ENCODE measurements at regions of chr15 and their contacts with region 1.

Region 1: DNA sequence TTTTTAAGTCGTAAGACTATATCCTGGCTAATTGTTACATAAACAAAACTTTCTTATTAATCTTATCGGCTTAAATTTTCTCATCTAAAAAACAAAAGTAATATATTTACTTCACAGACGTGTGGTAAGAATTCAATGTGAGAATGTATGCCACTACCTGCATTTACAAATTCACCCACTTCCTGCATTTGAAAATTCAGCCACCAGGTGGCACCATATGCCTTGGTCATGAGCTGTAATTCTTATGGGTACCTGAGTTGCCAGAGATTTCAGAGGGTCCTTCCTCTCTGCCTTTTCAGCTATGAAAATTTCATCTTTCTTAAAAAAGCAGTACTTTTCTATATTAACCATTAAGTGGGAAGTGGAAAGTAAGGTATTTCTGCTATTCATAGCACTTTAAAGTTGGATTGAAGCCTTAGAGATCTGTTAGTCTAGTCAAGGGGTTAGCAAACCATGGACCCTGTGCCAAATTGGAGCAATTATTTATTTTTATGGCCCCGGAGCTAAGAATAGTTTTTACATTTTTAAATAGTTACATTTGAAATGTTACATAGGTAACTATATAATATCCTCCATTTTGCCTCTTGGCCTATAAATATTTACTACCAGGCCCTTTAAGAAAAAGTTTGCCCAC is 127.8 kb downstream of the HCN4 start:
- DNase-seq: peak; percentile 47
- H3K4me3 ChIP-seq: no peak overlapping the region; a peak in 1 of 4 replicates
- H3K27ac ChIP-seq: no peak overlapping the region
- H3K4me1 ChIP-seq: peaks cover 0 to 24% of the 10 kb centered on the region in 2 experiments; a peak in 2 of 4 replicates
- H3K27me3 ChIP-seq: no peaks in the 10 kb centered on the region
- CTCF ChIP-seq: peak; percentile 95
- EP300 ChIP-seq: no peak
- RAD21 ChIP-seq: peak; percentile 82

Region 2: GRCh38 chr15:73081321-73081958 is 159.5 kb before region 1 on chr15:
- CTCF ChIA-PET with region 1: interaction called, 11 read pairs
- POLR2A ChIA-PET with region 1: no interaction called
- DNase-seq: peak; percentile 17
- H3K4me3 ChIP-seq: no peak overlapping the region
- H3K27ac ChIP-seq: no peak overlapping the region
- H3K4me1 ChIP-seq: peaks cover 0 to 14% of the 10 kb centered on the region in 2 experiments; a peak in 2 of 4 replicates
- H3K27me3 ChIP-seq: no peaks in the 10 kb centered on the region
- CTCF ChIP-seq: peak; percentile 85
- EP300 ChIP-seq: no peak
- RAD21 ChIP-seq: peak; percentile 82

Region 3: DNA sequence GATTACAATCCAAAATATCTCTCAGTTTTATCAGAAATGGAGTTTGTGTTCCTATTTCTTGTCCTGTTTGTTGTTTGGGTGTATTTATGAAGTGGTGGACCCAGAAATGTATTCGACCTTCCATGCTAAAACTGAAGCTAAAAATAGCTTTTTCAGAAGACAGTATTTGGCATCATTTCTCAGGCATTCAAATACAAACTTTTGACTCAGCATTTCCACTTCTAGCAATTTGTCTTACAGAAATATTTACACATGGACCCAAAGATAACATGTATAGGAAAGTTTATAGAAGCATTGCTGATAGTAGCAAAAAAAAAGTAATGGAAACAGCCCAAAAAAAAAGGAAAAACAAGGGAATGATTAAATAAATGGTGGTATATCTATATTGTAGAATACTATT is 28.6 kb before region 1 on chr15:
- CTCF ChIA-PET with region 1: interaction called, 10 read pairs
- POLR2A ChIA-PET with region 1: no interaction called
- DNase-seq: no peak
- H3K4me3 ChIP-seq: no peak overlapping the region
- H3K27ac ChIP-seq: no peak overlapping the region
- H3K4me1 ChIP-seq: no peaks in the 10 kb centered on the region
- H3K27me3 ChIP-seq: no peaks in the 10 kb centered on the region
- CTCF ChIP-seq: no peak
- EP300 ChIP-seq: no peak
- RAD21 ChIP-seq: no peak

Region 4: DNA sequence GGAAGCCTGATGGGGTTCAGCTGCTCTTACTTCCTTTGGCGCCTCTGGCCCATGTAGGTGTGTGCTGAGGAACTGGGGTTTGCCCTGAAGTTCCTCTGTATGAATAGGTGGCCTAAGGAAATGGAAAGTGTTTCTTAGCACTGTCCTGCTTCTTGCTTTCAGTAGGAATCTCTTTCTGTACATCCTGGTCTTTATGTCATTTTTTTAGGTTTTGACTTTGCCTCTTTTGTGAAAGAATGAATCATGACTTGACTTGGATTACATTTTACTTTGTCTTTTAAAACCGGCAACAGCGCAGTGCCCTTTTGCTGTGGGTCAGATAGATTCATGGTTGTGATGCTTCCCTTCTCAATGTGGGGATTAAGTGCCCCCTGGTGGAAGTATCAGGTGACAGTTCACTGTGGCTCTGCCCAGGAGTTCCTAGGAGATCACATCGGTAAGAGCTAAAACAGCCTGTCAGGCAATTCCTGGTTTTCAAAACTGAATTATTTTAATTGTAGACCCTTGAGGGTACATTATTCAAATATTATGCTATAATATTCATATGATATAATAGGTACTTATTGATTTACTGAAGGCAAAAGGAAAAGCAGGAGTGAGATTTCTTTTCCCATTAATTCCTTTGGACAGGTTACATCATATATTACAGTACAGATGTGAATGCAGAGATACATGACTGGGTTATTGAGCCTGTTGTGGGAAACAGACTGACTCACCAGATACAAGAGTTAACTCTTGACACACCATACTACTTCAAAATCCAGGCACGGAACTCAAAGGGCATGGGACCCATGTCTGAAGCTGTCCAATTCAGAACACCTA is 32.4 kb after region 1 on chr15:
- CTCF ChIA-PET with region 1: interaction called, 124 read pairs
- POLR2A ChIA-PET with region 1: no interaction called
- DNase-seq: peak; percentile 71
- H3K4me3 ChIP-seq: peak overlapping the region in 1 of 2 experiments; percentile 7; a peak in 1 of 4 replicates
- H3K27ac ChIP-seq: no peak overlapping the region
- H3K4me1 ChIP-seq: no peaks in the 10 kb centered on the region; a peak in 1 of 4 replicates
- H3K27me3 ChIP-seq: no peaks in the 10 kb centered on the region
- CTCF ChIP-seq: peak; percentile 87
- EP300 ChIP-seq: no peak
- RAD21 ChIP-seq: peak; percentile 85

Measured in SK-N-SH (cell line).